ENCODE measurements at regions of chr1 and their contacts with region 1.

Region 1: DNA sequence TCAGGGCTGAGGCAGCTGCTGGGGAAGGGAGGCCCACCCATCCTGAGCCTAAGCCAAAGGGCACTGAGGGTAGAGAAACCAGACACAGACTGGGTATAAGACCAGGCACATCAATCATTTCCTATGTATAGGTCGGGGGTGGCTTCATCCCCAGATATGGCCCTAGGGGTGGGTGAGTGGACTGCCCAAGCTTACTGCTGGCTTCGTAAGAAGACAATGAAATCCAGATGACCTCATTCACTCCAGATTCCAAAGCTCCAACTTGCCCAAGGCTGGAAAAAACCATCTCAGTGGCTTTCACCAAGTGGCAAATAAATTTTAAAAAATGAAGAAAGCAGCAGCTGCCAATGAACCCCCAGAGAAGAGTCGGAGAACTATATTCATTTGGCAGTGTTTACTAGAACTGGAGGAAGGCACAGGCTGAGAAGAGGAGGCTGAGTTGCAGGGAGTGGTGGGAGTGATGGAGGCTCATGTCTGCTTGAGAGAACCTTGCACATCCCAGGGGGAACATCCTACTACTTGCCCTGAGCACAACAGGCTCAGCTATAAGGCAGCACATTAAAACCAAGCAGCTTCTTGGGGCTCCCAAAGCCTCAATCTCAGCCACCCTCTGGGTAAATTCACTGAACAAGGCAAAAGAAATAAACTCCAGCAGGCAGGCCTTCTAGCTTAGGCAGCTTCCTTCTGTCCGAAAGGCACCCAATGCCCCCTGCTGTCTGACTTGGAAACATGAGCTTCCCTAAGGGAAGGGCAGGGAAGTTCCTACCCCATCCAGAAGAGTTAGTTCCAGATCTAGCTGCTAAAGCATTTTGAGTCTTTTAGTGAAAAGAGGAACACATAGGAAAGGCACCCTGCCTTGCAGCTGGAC is 14.1 kb downstream of the PEA15 start:
- DNase-seq: peak; percentile 15 to 40 (median 34)
- H3K4me3 ChIP-seq: no peak overlapping the region
- H3K27ac ChIP-seq: no peak overlapping the region
- H3K4me1 ChIP-seq: no peaks in the 10 kb centered on the region
- H3K27me3 ChIP-seq: no peaks in the 10 kb centered on the region

Region 2: DNA sequence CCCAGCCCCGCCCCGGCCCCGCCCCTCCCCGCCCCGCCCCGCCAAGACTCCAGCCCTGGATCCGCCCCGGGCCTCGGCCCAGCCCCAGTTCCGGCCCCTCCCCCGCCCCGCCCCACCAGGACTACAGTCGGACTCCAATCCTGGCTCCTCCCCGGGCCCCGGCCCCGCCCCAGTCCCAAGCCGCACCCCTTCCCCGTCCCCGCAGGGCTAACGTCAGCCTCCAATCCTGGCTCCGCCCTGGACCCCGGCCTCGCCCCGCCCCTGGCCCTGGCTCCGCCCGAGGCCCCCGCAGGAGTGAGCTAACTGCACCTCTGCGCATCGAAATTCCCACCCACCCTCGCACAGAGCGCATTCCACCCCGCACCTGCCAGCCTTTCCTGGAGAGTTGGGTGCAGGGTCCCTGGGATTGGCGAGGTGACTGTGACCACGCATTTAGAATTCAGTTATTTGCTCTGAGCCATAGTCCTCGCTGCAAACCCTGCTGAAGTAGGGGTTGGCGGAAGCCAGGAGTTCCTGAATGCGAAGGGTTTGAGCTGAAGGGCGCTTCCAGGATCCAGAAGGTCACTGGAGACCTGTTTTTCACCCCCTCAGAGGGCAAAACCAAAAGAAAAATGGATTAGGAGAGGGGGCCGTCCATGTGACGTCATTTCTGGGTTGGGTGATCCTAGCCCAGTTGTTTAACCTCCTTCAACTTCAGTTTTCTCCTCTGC is 120.3 kb before region 1 on chr1:
- CTCF ChIA-PET with region 1: interaction called, 13 read pairs
- POLR2A ChIA-PET with region 1: no interaction called
- DNase-seq: peak; percentile 92 to 96 (median 95)
- H3K4me3 ChIP-seq: peak overlapping the region; percentile 37 to 89 (median 71)
- H3K27ac ChIP-seq: peak overlapping the region; percentile 41 to 87
- H3K4me1 ChIP-seq: peaks cover 0 to 48% (median 35%) of the 10 kb centered on the region in 4 experiments
- H3K27me3 ChIP-seq: no peaks in the 10 kb centered on the region

Region 3: GRCh38 chr1:160205242-160206035 is 13.9 kb before region 1 on chr1 and contains the start of gene PEA15:
- CTCF ChIA-PET with region 1: interaction called, 34 read pairs
- POLR2A ChIA-PET with region 1: no interaction called
- DNase-seq: peak; percentile 53 to 73 (median 62)
- H3K4me3 ChIP-seq: peak within 1 kb of the TSS; percentile 60 to 93 (median 87)
- H3K27ac ChIP-seq: peak within 1 kb of the TSS in 1 of 2 experiments; percentile 77
- H3K4me1 ChIP-seq: peaks cover 7 to 27% (median 24%) of the 10 kb centered on the region in 4 experiments
- H3K27me3 ChIP-seq: no peaks in the 10 kb centered on the region

Region 4: GRCh38 chr1:160267284-160267991 is 48.1 kb after region 1 on chr1:
- CTCF ChIA-PET with region 1: no interaction called
- POLR2A ChIA-PET with region 1: no interaction called
- DNase-seq: no peak
- H3K4me3 ChIP-seq: no peak overlapping the region
- H3K27ac ChIP-seq: no peak overlapping the region
- H3K4me1 ChIP-seq: peaks cover 0 to 7% (median 5%) of the 10 kb centered on the region in 4 experiments
- H3K27me3 ChIP-seq: no peaks in the 10 kb centered on the region

Region 5: DNA sequence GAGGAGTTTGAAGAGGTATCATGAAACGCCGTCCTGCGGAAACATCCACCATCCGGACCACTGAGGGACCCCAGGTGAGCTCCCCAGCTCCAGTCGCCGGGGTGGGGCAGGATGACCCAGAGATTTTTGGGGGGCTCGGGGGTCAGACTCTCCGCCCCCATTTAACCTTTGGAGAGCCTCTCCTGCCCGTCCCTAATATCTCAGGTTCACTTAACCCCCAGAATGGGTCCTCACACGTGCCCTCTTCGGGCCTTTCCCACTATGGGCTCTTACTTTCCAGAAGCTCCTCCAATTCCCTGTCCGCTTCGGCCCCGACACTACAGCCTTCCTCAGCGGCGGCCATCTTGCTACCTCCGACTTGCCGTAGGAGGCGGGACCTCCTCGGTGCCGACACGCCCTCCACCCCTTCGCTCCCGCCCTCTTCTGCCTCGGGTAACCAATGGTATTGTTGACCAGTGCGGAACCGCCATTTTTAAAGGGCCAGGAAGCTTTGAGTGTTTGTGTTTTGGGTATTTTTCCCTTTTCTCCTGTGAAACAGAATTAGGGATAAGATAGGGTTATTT is 65.6 kb after region 1 on chr1 and contains the start of gene PEX19:
- CTCF ChIA-PET with region 1: no interaction called
- POLR2A ChIA-PET with region 1: no interaction called
- DNase-seq: peak; percentile 92 to 96 (median 95)
- H3K4me3 ChIP-seq: peak within 1 kb of the TSS; percentile 71 to 99 (median 89)
- H3K27ac ChIP-seq: peak within 1 kb of the TSS; percentile 71 to 92
- H3K4me1 ChIP-seq: peaks cover 8 to 17% (median 13%) of the 10 kb centered on the region in 4 experiments
- H3K27me3 ChIP-seq: no peaks in the 10 kb centered on the region

Measured in common myeloid progenitor, CD34-positive (primary cell).